ENCODE measurements at regions of chr10 and their contacts with region 1.

Region 1: GRCh38 chr10:62264702-62265436 is 3.8 kb downstream of the RTKN2 start:
- DNase-seq: no peak
- ATAC-seq: peak; percentile 59
- H3K4me3 Mint-ChIP-seq: 0 out of 2 replicates have a peak overlapping the region, but pooled peaks have one; percentile 15
- H3K27ac Mint-ChIP-seq: no peak overlapping the region
- H3K4me1 Mint-ChIP-seq: peaks cover 38% of the 10 kb centered on the region
- H3K27me3 Mint-ChIP-seq: peaks cover 2% of the 10 kb centered on the region
- CTCF ChIP-seq: peak; percentile 36

Region 2: GRCh38 chr10:61896854-61897661 is 367.8 kb before region 1 on chr10:
- CTCF ChIA-PET with region 1: interaction called, 11 read pairs
- POLR2A ChIA-PET with region 1: no interaction called
- DNase-seq: peak; percentile 58
- ATAC-seq: peak; percentile 92
- H3K4me3 Mint-ChIP-seq: peak overlapping the region; percentile 85
- H3K27ac Mint-ChIP-seq: no peak overlapping the region
- H3K4me1 Mint-ChIP-seq: peaks cover 31% of the 10 kb centered on the region
- H3K27me3 Mint-ChIP-seq: peaks cover 41% of the 10 kb centered on the region
- CTCF ChIP-seq: peak; percentile 58

Region 3: GRCh38 chr10:62244780-62245467 is 19.9 kb before region 1 on chr10:
- CTCF ChIA-PET with region 1: interaction called, 11 read pairs
- POLR2A ChIA-PET with region 1: interaction called, 3 read pairs
- DNase-seq: no peak
- ATAC-seq: peak; percentile 51
- H3K4me3 Mint-ChIP-seq: no peak overlapping the region
- H3K27ac Mint-ChIP-seq: peak overlapping the region; percentile 49; the same call in 1 of the 2 replicates
- H3K4me1 Mint-ChIP-seq: peaks cover 7% of the 10 kb centered on the region
- H3K27me3 Mint-ChIP-seq: no peaks in the 10 kb centered on the region
- CTCF ChIP-seq: peak; percentile 41